CD4-positive, alpha-beta memory T cell (primary cell): ENCODE measurements at regions of chr6 and their contacts with region 1.

Region 1: DNA sequence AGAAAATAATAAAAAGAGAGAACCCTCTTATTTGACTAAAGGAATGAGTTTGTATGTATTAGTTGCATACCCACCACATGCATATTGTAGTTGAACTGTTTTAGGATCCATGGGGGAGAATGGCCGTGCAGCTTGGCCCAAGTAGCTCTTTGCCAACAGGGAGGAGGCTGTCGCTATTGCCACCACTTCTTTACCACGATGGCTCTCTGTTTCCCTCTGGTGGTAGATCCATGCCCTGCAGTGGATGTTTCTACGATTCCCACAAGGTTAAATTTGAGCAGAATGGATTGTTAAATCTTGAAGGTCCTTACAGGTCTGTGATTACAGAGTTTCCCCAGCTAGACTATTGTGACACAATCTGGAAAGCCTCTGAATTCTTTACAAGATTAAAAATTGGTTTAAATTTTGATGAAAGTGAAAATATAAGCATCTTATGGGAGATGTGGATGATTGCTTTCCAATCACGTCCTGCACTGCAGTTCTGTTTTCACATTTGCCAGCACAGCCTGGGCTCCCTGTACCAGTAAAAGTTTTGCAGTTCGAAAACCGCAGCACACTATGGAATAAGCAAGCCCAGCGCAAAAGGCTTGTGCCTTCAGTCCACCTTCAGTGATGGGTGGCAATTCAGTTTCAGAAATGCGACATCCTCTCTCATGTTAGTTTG is 34.4 kb upstream of the FNDC1 start:
- DNase-seq: peak; percentile 69 to 77 (median 73)
- H3K4me3 ChIP-seq: no peak overlapping the region
- H3K4me3 Mint-ChIP-seq: no peak overlapping the region
- H3K27ac ChIP-seq: no peak overlapping the region
- H3K27ac Mint-ChIP-seq: no peak overlapping the region
- H3K4me1 ChIP-seq: peaks cover 6% of the 10 kb centered on the region
- H3K4me1 Mint-ChIP-seq: peaks cover 0 to 6% (median 4%) of the 10 kb centered on the region in 4 donors
- H3K27me3 ChIP-seq: no peaks in the 10 kb centered on the region
- H3K27me3 Mint-ChIP-seq: peaks cover 5 to 8% of the 10 kb centered on the region in 2 donors

Region 2: DNA sequence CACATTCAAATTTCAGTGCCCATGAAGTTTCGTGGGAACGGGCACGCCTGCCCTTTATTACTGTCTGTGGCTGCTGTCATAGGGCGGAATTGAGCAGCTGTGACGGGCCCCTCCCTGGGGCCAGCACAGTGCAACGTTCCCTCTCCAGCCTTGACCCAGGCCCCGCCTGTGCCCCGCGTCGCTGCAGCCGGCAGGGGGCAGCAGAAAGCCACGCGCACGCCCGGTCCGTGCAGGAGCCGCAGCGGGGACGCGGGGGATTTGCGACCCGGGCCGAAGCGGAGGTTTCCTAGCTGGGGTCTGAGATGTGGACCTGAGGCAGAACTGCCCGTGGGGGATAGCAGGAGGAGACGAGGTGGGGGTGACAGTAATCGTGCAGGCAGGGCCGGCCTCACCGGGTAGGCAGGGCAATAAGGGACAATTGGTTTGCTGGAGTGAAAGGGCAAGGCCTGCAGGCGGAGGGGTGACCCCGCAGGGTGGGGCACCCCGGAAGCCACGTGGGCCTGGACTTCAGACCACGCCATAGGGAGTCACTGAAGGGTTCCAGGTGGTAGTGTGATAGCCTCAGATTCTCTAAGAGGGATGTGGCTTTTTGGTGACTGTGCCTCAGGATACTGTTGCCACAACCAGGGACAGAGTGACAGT is 430.5 kb before region 1 on chr6:
- CTCF ChIA-PET with region 1: interaction called, 10 read pairs
- POLR2A ChIA-PET with region 1: no interaction called
- intact Hi-C with region 1: loop called (anchors 1 kb)
- DNase-seq: peak; percentile 67 to 82 (median 72)
- H3K4me3 ChIP-seq: peak overlapping the region; percentile 39 to 57
- H3K4me3 Mint-ChIP-seq: peak overlapping the region; percentile 82 to 89 (median 83)
- H3K27ac ChIP-seq: no peak overlapping the region
- H3K27ac Mint-ChIP-seq: peak overlapping the region; percentile 41 to 90 (median 79)
- H3K4me1 ChIP-seq: peaks cover 10% of the 10 kb centered on the region
- H3K4me1 Mint-ChIP-seq: peaks cover 9 to 21% (median 15%) of the 10 kb centered on the region in 4 donors
- H3K27me3 ChIP-seq: no peaks in the 10 kb centered on the region
- H3K27me3 Mint-ChIP-seq: no peaks in the 10 kb centered on the region

Region 3: DNA sequence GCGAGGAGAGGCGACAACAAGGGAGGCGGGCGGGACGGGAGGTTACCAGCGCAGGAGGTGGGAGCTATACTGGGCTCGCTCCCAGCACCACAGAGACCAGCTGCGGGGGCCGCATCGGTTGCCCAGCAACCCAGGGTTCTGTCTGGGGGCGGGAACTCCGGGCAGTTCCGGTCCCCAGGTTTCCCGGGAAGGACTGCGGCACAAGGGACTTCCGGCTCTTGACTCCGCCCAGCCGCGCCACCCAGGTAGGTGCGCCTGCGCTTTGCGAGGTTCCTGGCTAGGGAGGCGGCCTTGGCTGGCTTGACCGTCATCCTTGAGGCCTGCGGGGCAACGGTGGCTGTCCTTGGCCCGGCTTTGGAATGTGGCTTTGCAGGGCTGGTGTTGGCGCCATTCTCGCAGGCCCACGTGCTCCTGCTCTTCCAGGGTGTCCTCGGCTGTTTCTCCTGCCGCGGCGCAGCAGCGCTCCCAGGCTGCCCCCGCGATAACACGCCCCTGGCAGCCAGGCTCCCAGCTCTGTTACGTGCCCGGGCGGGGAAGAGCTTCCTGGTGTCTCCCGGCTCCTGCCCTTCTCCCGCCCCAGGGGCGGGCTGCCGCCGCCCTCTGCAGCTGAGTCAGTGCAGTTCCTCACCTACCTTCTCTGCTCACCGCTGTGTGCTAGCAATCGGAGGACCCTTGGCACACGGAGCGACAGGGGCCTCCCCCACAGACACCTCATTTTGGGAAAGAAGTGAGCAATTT is 135.0 kb before region 1 on chr6 and contains the start of gene RSPH3:
- CTCF ChIA-PET with region 1: interaction called, 440 read pairs
- POLR2A ChIA-PET with region 1: interaction called, 3 read pairs
- intact Hi-C with region 1: no loop called
- DNase-seq: peak; percentile 81 to 87 (median 83)
- H3K4me3 ChIP-seq: peak within 1 kb of the TSS; percentile 84
- H3K4me3 Mint-ChIP-seq: peak within 1 kb of the TSS; percentile 96 to 99 (median 98)
- H3K27ac ChIP-seq: peak within 1 kb of the TSS; percentile 73
- H3K27ac Mint-ChIP-seq: peak within 1 kb of the TSS; percentile 92 to 97 (median 95)
- H3K4me1 ChIP-seq: peaks cover 18% of the 10 kb centered on the region
- H3K4me1 Mint-ChIP-seq: peaks cover 10 to 33% (median 18%) of the 10 kb centered on the region in 4 donors
- H3K27me3 ChIP-seq: no peaks in the 10 kb centered on the region
- H3K27me3 Mint-ChIP-seq: no peaks in the 10 kb centered on the region
- total RNA-seq, gene RSPH3: 3.4 to 3.5 TPM

Region 4: DNA sequence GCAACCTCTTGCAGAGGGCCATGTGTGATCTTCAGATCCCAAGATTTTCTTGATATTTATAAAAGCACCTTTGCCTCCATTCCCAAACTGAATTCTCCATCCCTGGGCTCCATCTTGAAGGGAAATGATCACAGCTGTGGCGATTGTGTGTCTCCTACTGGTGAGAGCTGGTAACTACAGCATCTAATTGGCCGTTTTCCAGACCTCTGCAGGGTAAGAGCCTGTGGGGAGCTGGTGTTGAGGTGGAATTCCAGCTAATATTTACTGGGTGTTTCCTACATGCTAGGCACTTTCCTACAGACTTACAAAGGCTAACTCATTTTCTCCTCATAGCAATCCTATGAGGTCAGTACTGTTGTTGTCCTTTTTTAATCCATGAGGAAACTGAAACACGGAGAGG is 24.8 kb before region 1 on chr6:
- CTCF ChIA-PET with region 1: interaction called, 193 read pairs
- POLR2A ChIA-PET with region 1: interaction called, 23 read pairs
- intact Hi-C with region 1: loop called (anchors 1 kb)
- DNase-seq: peak; percentile 34 to 48 (median 40)
- H3K4me3 ChIP-seq: no peak overlapping the region
- H3K4me3 Mint-ChIP-seq: peak overlapping the region in 4 of 8 donors; percentile 26 to 60 (median 50)
- H3K27ac ChIP-seq: peak overlapping the region; percentile 90
- H3K27ac Mint-ChIP-seq: peak overlapping the region; percentile 88 to 94 (median 92)
- H3K4me1 ChIP-seq: peaks cover 81% of the 10 kb centered on the region
- H3K4me1 Mint-ChIP-seq: peaks cover 53 to 79% (median 63%) of the 10 kb centered on the region in 4 donors
- H3K27me3 ChIP-seq: no peaks in the 10 kb centered on the region
- H3K27me3 Mint-ChIP-seq: no peaks in the 10 kb centered on the region

Region 5: DNA sequence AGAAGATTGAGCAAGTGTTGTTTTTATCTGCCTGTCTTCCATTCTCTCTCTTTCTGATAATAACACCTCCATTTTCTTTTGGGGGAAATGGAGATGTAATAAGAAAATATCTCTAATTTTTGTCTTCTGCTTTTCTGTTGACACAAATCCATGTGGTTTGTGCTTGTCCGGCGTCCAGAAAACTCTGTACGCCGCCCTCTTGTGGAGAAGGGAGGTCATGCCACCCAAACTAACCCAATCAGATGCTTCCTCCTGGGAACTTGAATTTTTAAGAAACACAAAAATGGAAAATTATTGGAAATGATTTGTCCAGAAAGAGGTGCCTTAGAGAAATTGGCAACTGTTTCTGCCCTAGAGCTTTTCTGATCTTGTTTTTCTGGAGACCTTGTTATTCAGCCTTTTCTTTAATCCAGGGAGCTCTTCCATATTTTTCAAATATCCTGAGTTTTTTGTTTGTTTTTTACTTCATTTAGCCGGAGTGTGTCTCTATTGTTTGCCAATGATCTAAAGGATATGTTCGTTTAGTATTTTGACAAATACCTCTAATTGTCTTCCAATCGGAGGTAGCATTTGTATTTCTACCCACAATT is 16.5 kb after region 1 on chr6:
- CTCF ChIA-PET with region 1: interaction called, 19 read pairs
- POLR2A ChIA-PET with region 1: no interaction called
- intact Hi-C with region 1: no loop called
- DNase-seq: peak in 3 of 5 donors; percentile 24 to 30 (median 25)
- H3K4me3 ChIP-seq: no peak overlapping the region
- H3K4me3 Mint-ChIP-seq: no peak overlapping the region
- H3K27ac ChIP-seq: no peak overlapping the region
- H3K27ac Mint-ChIP-seq: peak overlapping the region in 1 of 7 donors; percentile 28
- H3K4me1 ChIP-seq: no peaks in the 10 kb centered on the region
- H3K4me1 Mint-ChIP-seq: peaks cover 0 to 4% (median 2%) of the 10 kb centered on the region in 4 donors
- H3K27me3 ChIP-seq: no peaks in the 10 kb centered on the region
- H3K27me3 Mint-ChIP-seq: peaks cover 2 to 3% of the 10 kb centered on the region in 2 donors

Region 6: GRCh38 chr6:160160450-160160849 is 1025.6 kb after region 1 on chr6:
- CTCF ChIA-PET with region 1: no interaction called
- POLR2A ChIA-PET with region 1: no interaction called
- intact Hi-C with region 1: no loop called
- DNase-seq: no peak
- H3K4me3 ChIP-seq: no peak overlapping the region
- H3K4me3 Mint-ChIP-seq: no peak overlapping the region
- H3K27ac ChIP-seq: no peak overlapping the region
- H3K27ac Mint-ChIP-seq: no peak overlapping the region
- H3K4me1 ChIP-seq: no peaks in the 10 kb centered on the region
- H3K4me1 Mint-ChIP-seq: no peaks in the 10 kb centered on the region
- H3K27me3 ChIP-seq: no peaks in the 10 kb centered on the region
- H3K27me3 Mint-ChIP-seq: peaks cover 0 to 4% of the 10 kb centered on the region in 2 donors